ENCODE measurements at regions of chr7 and their contacts with region 1.

Region 1: DNA sequence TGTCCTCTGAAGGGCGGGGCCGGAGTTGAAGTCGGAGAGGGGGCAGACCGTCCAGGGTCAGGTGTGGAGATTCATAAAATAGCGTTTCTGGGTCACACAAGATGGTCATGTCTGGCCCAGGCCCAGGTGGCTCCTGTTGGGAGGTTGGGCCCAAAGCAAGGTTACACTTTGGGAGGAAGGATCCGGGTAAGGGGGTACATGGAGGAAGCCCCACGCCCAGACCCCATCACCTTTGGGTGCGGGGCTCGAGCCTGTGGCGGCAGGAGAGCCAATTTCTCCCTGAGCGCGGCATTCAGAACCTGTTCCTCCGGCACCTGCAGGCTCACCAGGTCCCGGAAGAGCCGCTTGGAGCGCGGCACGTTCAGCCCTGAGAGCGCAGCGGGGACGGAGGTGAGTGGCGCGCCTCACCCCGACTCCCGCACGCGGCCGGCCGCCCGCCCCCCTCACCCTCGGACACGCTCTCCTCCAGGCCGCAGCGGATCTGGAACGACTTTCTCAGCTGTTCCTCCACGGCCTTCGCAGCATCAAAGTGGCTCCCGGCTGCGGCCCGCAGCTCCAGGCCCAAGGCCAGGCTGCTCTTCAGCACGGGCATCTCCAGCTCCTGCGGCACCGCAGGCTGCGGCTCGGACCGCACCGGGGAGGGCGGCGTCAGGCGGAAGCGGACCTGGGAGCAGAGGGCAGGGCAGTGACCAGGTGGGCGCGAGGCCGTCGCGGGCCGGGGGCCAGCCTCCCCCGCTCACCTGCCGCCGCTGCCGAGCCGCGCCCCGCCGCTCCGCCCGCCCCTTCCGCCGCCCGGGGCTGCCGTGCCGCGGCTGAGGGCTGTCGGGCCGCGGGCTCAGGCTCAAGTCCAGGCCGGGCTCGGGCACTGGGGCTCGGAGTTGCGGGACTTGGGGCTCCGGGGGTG is 644 bp downstream of the PPP1R35 start:
- DNase-seq: peak; percentile 62
- H3K4me3 Mint-ChIP-seq: peak overlapping the region; percentile 94
- H3K27ac Mint-ChIP-seq: peak overlapping the region; percentile 97
- H3K4me1 Mint-ChIP-seq: peaks cover 52% of the 10 kb centered on the region
- H3K27me3 Mint-ChIP-seq: no peaks in the 10 kb centered on the region

Region 2: DNA sequence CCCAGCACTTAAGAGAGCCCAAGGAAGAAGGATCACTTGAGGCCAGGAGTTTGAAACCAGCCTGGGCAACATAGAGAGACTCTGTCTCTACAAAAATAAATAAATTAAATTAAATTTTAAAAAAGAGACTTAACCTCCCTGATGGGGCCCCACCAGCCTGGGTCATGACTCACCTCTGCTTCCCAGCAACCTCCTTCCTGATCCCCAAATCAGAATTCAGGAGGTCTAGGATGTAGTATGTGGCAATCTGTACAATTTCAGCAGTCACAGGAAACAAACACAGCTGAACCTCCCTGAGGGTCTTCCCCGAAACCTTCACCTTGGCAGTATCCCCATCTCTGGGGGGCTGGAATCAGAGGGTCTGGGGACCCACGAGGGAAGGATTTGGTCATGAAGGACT is 10.4 kb after region 1 on chr7:
- CTCF ChIA-PET with region 1: interaction called, 10 read pairs
- intact Hi-C with region 1: loop called (anchors 1 kb)
- DNase-seq: no peak
- H3K4me3 Mint-ChIP-seq: no peak overlapping the region
- H3K27ac Mint-ChIP-seq: no peak overlapping the region
- H3K4me1 Mint-ChIP-seq: peaks cover 20% of the 10 kb centered on the region
- H3K27me3 Mint-ChIP-seq: no peaks in the 10 kb centered on the region

Region 3: DNA sequence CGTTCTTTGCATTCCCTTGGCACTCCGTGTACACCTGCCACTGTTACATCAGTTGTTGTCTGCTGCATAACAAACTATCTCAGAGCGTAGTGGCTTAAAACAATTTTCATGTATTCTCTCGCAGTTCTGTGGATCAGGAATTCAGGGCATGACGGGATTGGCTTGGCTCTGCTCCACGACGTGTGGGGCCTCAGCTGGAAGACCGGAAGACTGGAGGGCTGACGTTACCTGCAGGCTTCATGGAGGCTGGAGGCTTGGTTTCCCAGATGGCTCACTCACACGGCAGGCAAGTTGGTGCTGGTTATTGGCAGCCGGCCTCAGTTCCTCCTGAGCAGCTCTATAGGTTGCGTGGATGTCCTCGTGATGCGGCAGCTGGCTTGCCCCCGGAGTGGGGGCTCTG is 73.6 kb after region 1 on chr7:
- CTCF ChIA-PET with region 1: no interaction called
- intact Hi-C with region 1: no loop called
- DNase-seq: no peak
- H3K4me3 Mint-ChIP-seq: no peak overlapping the region
- H3K27ac Mint-ChIP-seq: no peak overlapping the region
- H3K4me1 Mint-ChIP-seq: no peaks in the 10 kb centered on the region
- H3K27me3 Mint-ChIP-seq: no peaks in the 10 kb centered on the region